H1 (cell line): ENCODE measurements at regions of chrX and their contacts with region 1.

Region 1: DNA sequence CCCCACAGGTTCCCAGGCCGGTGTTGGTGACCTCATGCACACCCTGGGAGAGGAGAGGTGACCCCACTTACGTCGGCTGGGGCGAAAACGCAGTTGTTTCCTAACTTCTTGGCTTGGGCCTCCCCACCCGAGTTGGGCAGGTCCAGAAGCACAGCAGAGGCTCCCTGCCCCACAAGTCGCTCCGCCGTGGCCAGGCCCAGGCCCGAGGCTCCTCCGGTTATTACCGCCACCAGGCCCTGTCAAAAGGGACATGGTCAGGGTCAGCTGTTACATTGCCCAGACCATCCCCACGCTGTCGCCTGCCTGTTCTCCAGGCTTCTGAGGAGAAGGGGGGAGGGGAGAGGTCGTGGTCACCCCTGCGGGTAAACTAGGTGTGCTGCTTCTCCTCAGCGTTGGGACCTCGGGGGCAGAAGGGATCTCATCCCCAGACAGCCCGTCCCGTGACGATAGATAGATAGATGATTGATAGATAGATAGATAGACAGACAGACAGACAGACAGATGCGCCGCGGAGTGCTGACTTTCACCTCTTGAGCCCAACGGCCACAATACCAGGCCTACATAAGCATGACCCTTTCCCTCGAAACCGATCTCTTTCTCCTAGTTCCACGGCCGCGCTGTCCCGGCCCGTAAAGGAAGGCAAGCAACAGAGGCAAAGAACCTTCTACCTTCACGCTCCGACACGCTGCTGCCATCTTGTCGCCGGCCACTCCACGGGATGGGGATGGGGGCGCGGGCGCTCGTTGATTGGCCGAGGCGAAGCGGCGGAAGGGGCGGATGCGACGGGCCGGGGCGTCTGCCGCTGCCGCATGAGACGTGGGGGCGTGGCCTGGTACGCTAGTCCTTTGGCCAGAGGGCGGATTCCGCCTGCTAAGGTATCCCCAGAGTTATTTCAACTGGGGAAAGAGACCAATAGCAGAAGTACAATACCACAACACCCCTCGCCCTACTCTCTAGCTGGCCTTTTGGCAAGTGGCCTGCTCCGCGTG is at the start of gene HSD17B10:
- DNase-seq: peak in 1 of 2 experiments; percentile 83
- H3K4me3 ChIP-seq: peak within 1 kb of the TSS; percentile 74 to 94 (median 80)
- H3K27ac ChIP-seq: peak within 1 kb of the TSS; percentile 67; the same call in 1 of the 2 replicates
- H3K4me1 ChIP-seq: peaks cover 0 to 7% (median 0%) of the 10 kb centered on the region in 4 experiments; a peak in 3 of 7 replicates
- H3K27me3 ChIP-seq: no peaks in the 10 kb centered on the region
- CTCF ChIP-seq: no peak
- EP300 ChIP-seq: no peak
- POLR2A ChIP-seq: peak in 1 of 2 experiments; percentile 53; a peak in 2 of 3 replicates
- RAD21 ChIP-seq: no peak
- total RNA-seq, gene HSD17B10: 114 and 116 TPM in 2 replicates

Region 2: DNA sequence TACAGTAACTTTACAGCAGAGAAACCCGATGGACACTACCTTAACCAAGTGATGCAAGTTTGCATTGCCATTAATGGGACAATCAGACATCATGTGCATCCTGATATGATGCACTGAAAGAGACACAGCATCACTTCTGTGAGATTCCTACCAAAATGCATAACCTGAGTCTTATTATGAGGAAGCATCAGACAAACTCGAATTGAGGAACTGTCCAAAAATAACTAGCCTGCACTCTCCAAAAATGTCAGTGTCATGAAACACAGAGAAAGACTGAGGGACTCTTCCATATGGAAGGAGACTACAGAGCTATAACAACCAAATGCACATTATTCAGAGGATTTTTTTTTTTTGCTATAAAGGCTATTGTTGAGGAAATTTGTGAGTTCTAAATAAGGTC is 86.0 kb before region 1 on chrX:
- CTCF ChIA-PET with region 1: no interaction called
- POLR2A ChIA-PET with region 1: no interaction called
- DNase-seq: no peak
- H3K4me3 ChIP-seq: no peak overlapping the region
- H3K27ac ChIP-seq: no peak overlapping the region
- H3K4me1 ChIP-seq: no peaks in the 10 kb centered on the region
- H3K27me3 ChIP-seq: no peaks in the 10 kb centered on the region
- CTCF ChIP-seq: no peak
- EP300 ChIP-seq: no peak
- POLR2A ChIP-seq: no peak
- RAD21 ChIP-seq: no peak

Region 3: DNA sequence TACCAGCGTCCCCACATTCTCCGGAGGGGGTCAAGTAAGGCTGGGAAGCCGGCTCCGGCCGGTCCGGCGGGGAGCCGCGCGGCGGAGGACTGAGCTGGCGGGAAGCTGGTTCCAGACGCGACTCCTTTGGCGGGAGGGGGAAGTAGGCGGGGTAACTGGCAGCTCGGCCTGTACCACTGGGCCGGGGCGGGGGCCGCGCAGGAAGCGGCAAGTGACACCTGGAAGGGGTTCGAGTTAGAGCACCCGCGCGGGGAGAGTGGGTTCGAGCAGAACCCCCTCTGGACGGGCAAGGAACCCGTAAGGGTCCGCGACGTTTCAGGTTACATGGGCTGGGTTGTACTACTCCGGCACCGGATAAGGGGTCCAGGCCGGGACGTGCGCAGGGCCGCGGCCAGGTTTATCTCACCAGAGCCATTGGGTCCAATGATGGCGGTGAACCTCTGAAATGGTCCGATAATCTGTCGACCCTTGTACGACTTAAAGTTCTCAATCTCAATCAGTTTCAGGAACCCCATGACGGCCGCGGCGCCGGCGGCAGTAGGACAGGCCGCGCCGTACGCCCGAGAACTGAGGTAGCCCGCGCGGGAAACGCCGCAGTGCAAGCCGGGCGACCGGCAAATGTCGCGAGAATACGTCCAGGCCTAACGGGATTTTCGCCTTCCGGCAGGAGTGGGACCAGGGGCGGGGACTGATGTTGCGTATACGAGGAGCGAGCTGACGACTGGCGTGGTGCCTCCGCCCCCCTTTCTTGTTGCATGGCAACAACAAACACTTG is 11.7 kb before region 1 on chrX and contains the start of gene SMC1A:
- CTCF ChIA-PET with region 1: interaction called, 4 read pairs
- POLR2A ChIA-PET with region 1: interaction called, 33 read pairs
- DNase-seq: peak; percentile 91 to 92
- H3K4me3 ChIP-seq: peak within 1 kb of the TSS; percentile 74 to 79 (median 78)
- H3K27ac ChIP-seq: peak within 1 kb of the TSS; percentile 97
- H3K4me1 ChIP-seq: peaks cover 0 to 8% (median 4%) of the 10 kb centered on the region in 4 experiments; a peak in 5 of 7 replicates
- H3K27me3 ChIP-seq: no peaks in the 10 kb centered on the region
- CTCF ChIP-seq: no peak
- EP300 ChIP-seq: peak in 1 of 2 experiments; percentile 74; a peak in 1 of 3 replicates
- POLR2A ChIP-seq: peak in 1 of 2 experiments; percentile 91; a peak in 2 of 3 replicates
- RAD21 ChIP-seq: no peak
- total RNA-seq, gene SMC1A: 98.1 and 104 TPM in 2 replicates